MCF 10A (cell line): ENCODE measurements at regions of chr2 and their contacts with region 1.

Region 1: DNA sequence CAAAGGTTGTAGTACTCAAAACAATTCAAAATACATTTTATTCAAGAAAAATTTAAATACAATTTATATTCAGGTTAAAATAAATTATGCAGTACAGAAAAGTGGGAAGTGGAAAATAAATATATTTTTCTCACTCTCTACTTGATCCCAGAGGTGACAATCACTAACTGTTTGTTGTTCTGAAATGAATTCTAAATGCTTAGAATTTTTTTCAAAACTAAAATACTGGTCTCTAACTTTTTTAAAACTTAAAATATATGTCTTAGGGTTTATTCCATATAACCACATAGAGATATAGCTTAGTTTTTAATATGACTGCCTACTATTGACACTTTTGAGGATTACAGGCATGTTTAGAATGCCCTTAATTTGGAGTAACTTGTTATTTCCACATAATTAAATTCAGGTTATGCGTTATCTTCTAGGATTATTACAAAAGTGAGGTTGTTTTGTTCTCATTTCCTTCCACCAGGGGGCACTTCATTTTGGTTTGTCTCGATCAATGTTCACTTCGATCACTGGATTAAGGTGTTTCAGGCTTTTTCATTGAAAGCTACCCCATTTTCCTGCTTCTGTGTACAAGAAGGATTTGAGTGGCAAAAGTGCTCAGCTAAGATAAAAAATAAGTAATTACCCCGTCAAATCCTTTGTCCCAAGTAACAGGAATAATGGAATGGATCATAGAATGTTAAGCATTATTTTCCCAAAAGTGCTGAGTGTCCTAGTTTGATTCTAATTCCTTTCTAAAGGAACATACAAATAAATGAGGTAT is 27.1 kb upstream of the TFPI start:
- DNase-seq: peak; percentile 77
- H3K4me3 Mint-ChIP-seq: peak overlapping the region; percentile 58
- H3K27ac Mint-ChIP-seq: peak overlapping the region; percentile 81
- H3K4me1 Mint-ChIP-seq: peaks cover 9% of the 10 kb centered on the region
- H3K27me3 Mint-ChIP-seq: no peaks in the 10 kb centered on the region
- CTCF ChIP-seq: peak; percentile 76

Region 2: GRCh38 chr2:187493877-187494568 is 87.3 kb before region 1 on chr2:
- CTCF ChIA-PET with region 1: interaction called, 363 read pairs
- POLR2A ChIA-PET with region 1: interaction called, 4 read pairs
- intact Hi-C with region 1: no loop called
- DNase-seq: no peak
- H3K4me3 Mint-ChIP-seq: no peak overlapping the region
- H3K27ac Mint-ChIP-seq: no peak overlapping the region
- H3K4me1 Mint-ChIP-seq: peaks cover 2% of the 10 kb centered on the region
- H3K27me3 Mint-ChIP-seq: no peaks in the 10 kb centered on the region
- CTCF ChIP-seq: no peak

Region 3: DNA sequence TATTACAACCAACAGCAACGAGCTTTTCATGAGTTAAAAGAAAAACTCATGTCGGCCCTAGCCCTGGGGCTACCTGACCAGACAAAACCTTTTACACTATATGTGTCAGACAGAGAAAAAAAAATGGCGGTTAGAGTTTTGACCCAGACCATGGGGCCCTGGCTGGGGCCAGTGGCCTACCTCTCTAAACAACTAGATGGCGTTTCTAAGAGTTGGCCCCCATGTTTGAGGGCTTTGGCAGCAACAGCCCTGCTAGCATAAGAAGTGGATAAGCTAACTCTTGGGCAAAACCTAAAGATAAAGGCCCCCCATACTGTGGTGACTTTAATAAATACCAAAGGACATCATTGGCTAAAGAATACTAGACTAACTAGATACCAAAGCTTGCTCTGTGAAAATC is 66.4 kb before region 1 on chr2:
- CTCF ChIA-PET with region 1: interaction called, 28 read pairs
- POLR2A ChIA-PET with region 1: no interaction called
- intact Hi-C with region 1: no loop called
- DNase-seq: no peak
- H3K4me3 Mint-ChIP-seq: no peak overlapping the region
- H3K27ac Mint-ChIP-seq: no peak overlapping the region
- H3K4me1 Mint-ChIP-seq: no peaks in the 10 kb centered on the region
- H3K27me3 Mint-ChIP-seq: no peaks in the 10 kb centered on the region
- CTCF ChIP-seq: no peak

Region 4: DNA sequence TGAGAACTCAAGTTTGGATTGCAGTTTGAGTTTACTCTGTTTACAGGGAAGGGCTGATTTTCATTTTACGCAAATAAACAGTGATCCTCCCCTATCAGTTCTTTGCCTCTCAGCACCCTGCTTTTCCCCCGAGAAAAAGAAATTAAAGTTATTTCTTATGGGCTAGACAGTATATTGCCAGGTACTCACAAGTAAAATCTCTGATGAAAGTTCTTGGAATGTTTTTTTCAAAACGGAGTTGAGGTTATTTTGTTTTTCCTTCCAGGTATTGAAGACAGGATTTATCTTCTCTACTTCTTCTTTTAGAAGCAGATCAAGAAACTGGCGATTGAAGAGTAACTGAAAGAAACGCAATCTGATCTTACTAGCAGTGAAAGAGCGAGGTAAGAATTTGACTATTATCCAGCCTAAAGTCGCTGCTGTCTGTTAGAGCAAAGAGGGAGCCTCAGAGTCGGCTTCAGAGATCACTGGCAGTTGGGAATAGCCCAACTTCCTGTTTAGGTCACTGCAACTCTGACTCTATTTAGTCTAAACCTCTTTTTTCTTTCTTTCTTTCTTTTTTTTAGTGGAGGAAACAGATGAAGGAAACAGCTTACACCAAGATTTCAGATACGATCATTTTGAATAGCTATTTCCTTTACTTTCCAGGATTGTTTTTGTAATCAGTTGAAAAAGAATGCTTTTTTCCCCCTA is 27.2 kb before region 1 on chr2 and contains the start of gene TFPI:
- CTCF ChIA-PET with region 1: interaction called, 22 read pairs
- POLR2A ChIA-PET with region 1: interaction called, 5 read pairs
- intact Hi-C with region 1: no loop called
- DNase-seq: peak; percentile 72
- H3K4me3 Mint-ChIP-seq: peak within 1 kb of the TSS; percentile 87
- H3K27ac Mint-ChIP-seq: peak within 1 kb of the TSS; percentile 98
- H3K4me1 Mint-ChIP-seq: peaks cover 20% of the 10 kb centered on the region
- H3K27me3 Mint-ChIP-seq: no peaks in the 10 kb centered on the region
- CTCF ChIP-seq: no peak
- total RNA-seq, gene TFPI: 67.4 and 71.1 TPM in 2 replicates

Region 5: DNA sequence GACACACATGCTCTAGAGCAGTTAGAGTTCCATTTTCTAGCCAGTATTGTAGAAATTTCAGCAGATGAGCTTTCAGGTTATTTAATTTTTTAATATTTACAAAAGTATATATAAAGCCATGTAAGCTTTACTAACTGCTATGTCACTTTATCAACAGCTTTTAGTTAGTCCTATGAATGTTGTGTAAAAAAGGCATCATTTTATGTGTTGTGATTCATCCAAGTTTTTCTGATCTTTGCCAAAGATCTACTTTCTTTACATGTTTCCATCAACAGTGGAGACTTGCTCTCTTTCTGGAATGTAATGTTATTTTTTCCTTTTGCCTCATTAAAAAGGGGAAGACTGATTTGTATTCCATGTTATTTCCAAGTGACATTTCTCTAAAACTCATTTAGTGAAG is 98.1 kb after region 1 on chr2:
- CTCF ChIA-PET with region 1: no interaction called
- POLR2A ChIA-PET with region 1: no interaction called
- intact Hi-C with region 1: no loop called
- DNase-seq: no peak
- H3K4me3 Mint-ChIP-seq: no peak overlapping the region
- H3K27ac Mint-ChIP-seq: no peak overlapping the region
- H3K4me1 Mint-ChIP-seq: no peaks in the 10 kb centered on the region
- H3K27me3 Mint-ChIP-seq: no peaks in the 10 kb centered on the region
- CTCF ChIP-seq: no peak

Region 6: GRCh38 chr2:187842978-187843847 is 261.9 kb after region 1 on chr2:
- CTCF ChIA-PET with region 1: interaction called, 126 read pairs
- POLR2A ChIA-PET with region 1: interaction called, 12 read pairs
- intact Hi-C with region 1: loop called (anchors 1 kb)
- DNase-seq: peak; percentile 74
- H3K4me3 Mint-ChIP-seq: no peak overlapping the region
- H3K27ac Mint-ChIP-seq: no peak overlapping the region
- H3K4me1 Mint-ChIP-seq: no peaks in the 10 kb centered on the region
- H3K27me3 Mint-ChIP-seq: no peaks in the 10 kb centered on the region
- CTCF ChIP-seq: peak; percentile 56

Region 7: DNA sequence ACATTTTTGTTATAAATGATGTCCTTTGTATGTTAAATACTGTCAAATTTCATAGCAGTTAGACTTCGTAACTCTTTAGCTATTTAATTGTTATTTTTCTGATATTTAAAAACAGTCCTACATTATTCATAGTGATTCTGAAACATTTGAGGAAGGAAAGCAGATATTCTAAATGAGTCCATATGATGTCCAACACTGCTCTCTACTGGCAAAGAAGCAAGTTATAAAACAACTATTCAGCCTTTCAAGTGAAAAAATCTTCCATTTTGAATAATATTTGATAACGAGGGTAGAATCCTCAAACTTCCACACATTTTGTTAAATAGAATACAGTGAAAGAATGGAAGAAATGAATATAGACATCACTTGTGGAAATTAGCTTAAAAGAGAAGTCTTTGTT is 931.1 kb after region 1 on chr2:
- CTCF ChIA-PET with region 1: interaction called, 14 read pairs
- POLR2A ChIA-PET with region 1: no interaction called
- intact Hi-C with region 1: loop called (anchors 1 kb)
- DNase-seq: peak; percentile 54
- H3K4me3 Mint-ChIP-seq: no peak overlapping the region
- H3K27ac Mint-ChIP-seq: no peak overlapping the region
- H3K4me1 Mint-ChIP-seq: no peaks in the 10 kb centered on the region
- H3K27me3 Mint-ChIP-seq: no peaks in the 10 kb centered on the region
- CTCF ChIP-seq: peak; percentile 62